ENCODE measurements at regions of chr9 and their contacts with region 1.

Region 1: DNA sequence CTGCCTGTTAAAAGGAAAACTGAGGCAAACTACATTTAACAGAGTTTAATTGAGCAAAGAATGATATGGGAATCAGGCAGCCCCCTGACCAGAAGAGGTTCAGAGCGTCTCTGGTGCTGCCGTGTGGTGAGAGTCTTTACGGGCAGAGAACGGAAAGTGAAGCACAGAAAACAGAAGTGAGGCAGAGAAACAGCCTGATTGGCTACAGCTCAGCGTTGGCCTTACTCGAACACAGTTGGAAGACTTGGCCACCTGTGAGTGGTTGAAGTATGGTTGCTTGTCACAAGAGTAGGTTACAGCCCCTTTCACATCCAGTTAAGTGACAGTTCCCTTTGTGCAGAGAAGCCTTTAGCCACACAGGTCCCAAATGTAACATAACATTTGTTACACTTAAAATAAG is 16.9 kb upstream of the FBP1 start:
- DNase-seq: peak; percentile 79
- ATAC-seq: peak; percentile 99
- H3K4me3 ChIP-seq: peak overlapping the region; percentile 31; the same call in 1 of the 2 replicates
- H3K27ac ChIP-seq: peak overlapping the region; percentile 60
- H3K4me1 ChIP-seq: peaks cover 17% of the 10 kb centered on the region
- H3K27me3 ChIP-seq: no peaks in the 10 kb centered on the region
- CTCF ChIP-seq: 0 out of 6 replicates have a peak, but pooled peaks of 1 of the 3 experiments have one; percentile 5
- EP300 ChIP-seq: no peak
- POLR2A ChIP-seq: peak; percentile 81
- RAD21 ChIP-seq: no peak

Region 2: GRCh38 chr9:94668418-94668932 is 12.3 kb after region 1 on chr9:
- CTCF ChIA-PET with region 1: interaction called, 47 read pairs
- POLR2A ChIA-PET with region 1: interaction called, 6 read pairs
- RAD21 ChIA-PET with region 1: interaction called, 10 read pairs
- SMC1A ChIA-PET with region 1: interaction called, 7 read pairs
- in situ Hi-C with region 1: no loop called
- intact Hi-C with region 1: no loop called
- DNase-seq: no peak
- ATAC-seq: peak; percentile 8; the same call in 2 of the 3 replicates
- H3K4me3 ChIP-seq: no peak overlapping the region
- H3K27ac ChIP-seq: no peak overlapping the region
- H3K4me1 ChIP-seq: no peaks in the 10 kb centered on the region
- H3K27me3 ChIP-seq: no peaks in the 10 kb centered on the region; a peak in 1 of 4 replicates
- CTCF ChIP-seq: no peak
- EP300 ChIP-seq: no peak
- POLR2A ChIP-seq: no peak
- RAD21 ChIP-seq: no peak

Region 3: GRCh38 chr9:95373069-95373681 is 717.0 kb after region 1 on chr9:
- CTCF ChIA-PET with region 1: no interaction called
- POLR2A ChIA-PET with region 1: no interaction called
- RAD21 ChIA-PET with region 1: no interaction called
- SMC1A ChIA-PET with region 1: no interaction called
- in situ Hi-C with region 1: no loop called
- intact Hi-C with region 1: no loop called
- DNase-seq: no peak
- ATAC-seq: no peak
- H3K4me3 ChIP-seq: no peak overlapping the region
- H3K27ac ChIP-seq: no peak overlapping the region
- H3K4me1 ChIP-seq: no peaks in the 10 kb centered on the region
- H3K27me3 ChIP-seq: no peaks in the 10 kb centered on the region
- CTCF ChIP-seq: no peak
- EP300 ChIP-seq: no peak
- POLR2A ChIP-seq: no peak
- RAD21 ChIP-seq: no peak

Measured in GM12878 (cell line).